Activated CD4-positive, alpha-beta T cell treated with anti-CD3 and anti-CD28 coated beads, Interleukin-2, amount 10 ng/mL, durations not matched to agents 24 days and 14 days (primary cell): ENCODE measurements at regions of chr3 and their contacts with region 1.

Region 1: GRCh38 chr3:187919048-187919447 is 173.8 kb upstream of the BCL6 start:
- DNase-seq: peak; percentile 91
- H3K4me3 Mint-ChIP-seq: peak overlapping the region; percentile 76
- H3K27ac Mint-ChIP-seq: peak overlapping the region; percentile 96
- H3K4me1 Mint-ChIP-seq: peaks cover 71% of the 10 kb centered on the region
- H3K27me3 Mint-ChIP-seq: no peaks in the 10 kb centered on the region

Region 2: GRCh38 chr3:187833799-187834578 is 85.1 kb before region 1 on chr3:
- intact Hi-C with region 1: loop called (anchors 1 kb)
- DNase-seq: no peak
- H3K4me3 Mint-ChIP-seq: no peak overlapping the region
- H3K27ac Mint-ChIP-seq: peak overlapping the region; percentile 23
- H3K4me1 Mint-ChIP-seq: peaks cover 33% of the 10 kb centered on the region
- H3K27me3 Mint-ChIP-seq: no peaks in the 10 kb centered on the region

Region 3: GRCh38 chr3:187986514-187986934 is 67.5 kb after region 1 on chr3:
- intact Hi-C with region 1: loop called (anchors 1 kb)
- DNase-seq: peak; percentile 77
- H3K4me3 Mint-ChIP-seq: peak overlapping the region; percentile 56
- H3K27ac Mint-ChIP-seq: peak overlapping the region; percentile 84
- H3K4me1 Mint-ChIP-seq: peaks cover 57% of the 10 kb centered on the region
- H3K27me3 Mint-ChIP-seq: no peaks in the 10 kb centered on the region

Region 4: GRCh38 chr3:188170461-188171459 is 251.7 kb after region 1 on chr3:
- intact Hi-C with region 1: loop called (anchors 1 kb)
- DNase-seq: peak; percentile 79
- H3K4me3 Mint-ChIP-seq: peak overlapping the region; percentile 4
- H3K27ac Mint-ChIP-seq: peak overlapping the region; percentile 85
- H3K4me1 Mint-ChIP-seq: peaks cover 39% of the 10 kb centered on the region
- H3K27me3 Mint-ChIP-seq: no peaks in the 10 kb centered on the region

Region 5: DNA sequence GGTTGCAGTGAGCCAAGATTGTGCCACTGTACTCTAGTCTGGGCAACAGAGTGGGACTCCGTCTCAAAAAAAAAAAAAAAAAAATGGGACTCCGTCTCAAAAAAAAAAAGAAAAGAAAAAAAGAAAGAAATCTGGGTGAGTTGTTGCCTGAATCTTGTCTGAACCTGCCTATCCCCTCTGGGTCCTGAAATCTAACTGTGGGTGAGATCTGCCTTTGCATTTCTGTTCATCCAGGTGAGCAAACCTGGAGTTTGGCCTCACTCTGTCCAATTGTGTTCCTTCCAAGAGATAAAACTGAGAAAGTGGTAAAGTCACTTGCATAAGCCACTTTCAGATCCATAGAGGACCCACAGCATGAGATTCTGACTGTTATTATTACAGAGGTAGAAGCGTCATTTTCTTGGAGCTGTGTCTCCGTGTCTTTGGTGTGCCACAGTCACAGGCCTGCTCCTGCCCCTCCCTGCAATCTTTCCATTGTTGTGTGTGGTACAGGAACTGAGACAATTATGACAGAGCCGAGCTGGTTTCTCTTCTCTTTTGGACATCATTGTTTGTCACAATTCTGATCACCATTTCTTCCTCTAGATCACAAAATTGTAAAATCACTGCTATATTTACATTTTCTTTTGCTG is 470.8 kb after region 1 on chr3:
- intact Hi-C with region 1: loop called (anchors 2 kb)
- DNase-seq: peak; percentile 84
- H3K4me3 Mint-ChIP-seq: peak overlapping the region; percentile 49
- H3K27ac Mint-ChIP-seq: peak overlapping the region; percentile 90
- H3K4me1 Mint-ChIP-seq: peaks cover 42% of the 10 kb centered on the region
- H3K27me3 Mint-ChIP-seq: no peaks in the 10 kb centered on the region

Region 6: DNA sequence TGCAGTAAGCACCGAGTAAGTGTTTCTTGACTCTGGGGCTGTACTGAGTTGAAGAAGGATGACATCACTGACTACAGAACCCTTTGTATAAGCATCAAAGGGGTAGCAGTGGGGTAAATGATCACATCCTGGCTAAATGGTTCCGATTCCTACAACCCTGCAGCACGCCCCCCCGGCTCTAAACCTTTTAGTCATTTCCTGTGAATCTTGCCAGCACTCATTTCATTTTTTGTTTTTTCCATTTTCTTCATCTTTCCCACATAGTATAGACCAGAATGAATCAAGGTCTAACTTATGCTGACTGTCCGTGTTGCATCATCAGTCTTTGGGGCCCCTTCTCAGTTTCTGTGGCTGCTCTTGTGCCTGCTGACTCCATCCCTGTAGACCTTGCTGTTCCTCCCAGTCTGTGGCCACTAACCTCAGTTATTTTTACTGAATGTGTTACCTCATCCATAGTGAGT is 869.6 kb after region 1 on chr3:
- intact Hi-C with region 1: loop called (anchors 1 kb)
- DNase-seq: peak; percentile 85
- H3K4me3 Mint-ChIP-seq: no peak overlapping the region
- H3K27ac Mint-ChIP-seq: no peak overlapping the region
- H3K4me1 Mint-ChIP-seq: peaks cover 2% of the 10 kb centered on the region
- H3K27me3 Mint-ChIP-seq: no peaks in the 10 kb centered on the region

Region 7: DNA sequence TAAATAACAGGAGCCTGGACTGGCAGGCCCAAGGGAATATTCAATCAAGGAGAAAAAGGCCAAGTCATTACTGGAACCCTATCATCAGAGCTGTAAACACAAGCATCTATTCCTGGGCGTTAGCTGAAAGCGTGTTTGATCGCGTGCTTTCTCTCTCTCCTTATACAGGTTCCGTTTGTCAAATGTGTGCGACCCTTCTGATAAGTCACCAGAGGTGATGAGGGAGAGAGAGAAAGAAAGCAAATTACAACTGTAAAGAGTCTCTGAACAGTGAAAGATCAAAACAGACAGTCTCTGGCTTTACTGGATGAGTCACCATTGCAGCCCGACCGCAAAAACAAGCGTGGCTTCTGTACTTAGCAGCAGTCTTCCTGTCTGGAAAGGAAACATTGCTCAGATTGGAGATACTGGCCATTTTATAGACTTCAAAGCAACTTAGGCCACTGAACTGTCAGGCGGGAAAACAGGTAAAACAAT is 1213.2 kb after region 1 on chr3:
- intact Hi-C with region 1: loop called (anchors 2 kb)
- DNase-seq: peak; percentile 93
- H3K4me3 Mint-ChIP-seq: peak overlapping the region; percentile 70
- H3K27ac Mint-ChIP-seq: peak overlapping the region; percentile 91
- H3K4me1 Mint-ChIP-seq: peaks cover 25% of the 10 kb centered on the region
- H3K27me3 Mint-ChIP-seq: no peaks in the 10 kb centered on the region